ENCODE measurements at regions of chr14 and their contacts with region 1.

Region 1: GRCh38 chr14:95311752-95312151 is 8.0 kb downstream of the CLMN start:
- DNase-seq: peak; percentile 76 to 93 (median 90)
- H3K4me3 ChIP-seq: peak overlapping the region in 1 of 3 experiments; percentile 6
- H3K4me3 Mint-ChIP-seq: peak overlapping the region in 1 of 2 donors; percentile 79
- H3K27ac ChIP-seq: peak overlapping the region; percentile 96 to 97
- H3K27ac Mint-ChIP-seq: peak overlapping the region; percentile 92 to 98 (median 97)
- H3K4me1 ChIP-seq: peaks cover 62% of the 10 kb centered on the region in 2 donors
- H3K4me1 Mint-ChIP-seq: peaks cover 92% of the 10 kb centered on the region
- H3K27me3 ChIP-seq: no peaks in the 10 kb centered on the region
- H3K27me3 Mint-ChIP-seq: peaks cover 0 to 2% (median 1%) of the 10 kb centered on the region in 3 donors
- CTCF ChIP-seq: no peak

Region 2: GRCh38 chr14:95261616-95262510 is 49.9 kb before region 1 on chr14:
- intact Hi-C with region 1: loop called in 1 of 2 experiments (anchors 2 kb)
- DNase-seq: no peak
- H3K4me3 ChIP-seq: no peak overlapping the region
- H3K4me3 Mint-ChIP-seq: no peak overlapping the region
- H3K27ac ChIP-seq: no peak overlapping the region
- H3K27ac Mint-ChIP-seq: peak overlapping the region in 1 of 7 donors; percentile 50
- H3K4me1 ChIP-seq: peaks cover 17% of the 10 kb centered on the region in 2 donors
- H3K4me1 Mint-ChIP-seq: peaks cover 26% of the 10 kb centered on the region
- H3K27me3 ChIP-seq: no peaks in the 10 kb centered on the region
- H3K27me3 Mint-ChIP-seq: peaks cover 0 to 2% (median 2%) of the 10 kb centered on the region in 3 donors
- CTCF ChIP-seq: no peak

Region 3: DNA sequence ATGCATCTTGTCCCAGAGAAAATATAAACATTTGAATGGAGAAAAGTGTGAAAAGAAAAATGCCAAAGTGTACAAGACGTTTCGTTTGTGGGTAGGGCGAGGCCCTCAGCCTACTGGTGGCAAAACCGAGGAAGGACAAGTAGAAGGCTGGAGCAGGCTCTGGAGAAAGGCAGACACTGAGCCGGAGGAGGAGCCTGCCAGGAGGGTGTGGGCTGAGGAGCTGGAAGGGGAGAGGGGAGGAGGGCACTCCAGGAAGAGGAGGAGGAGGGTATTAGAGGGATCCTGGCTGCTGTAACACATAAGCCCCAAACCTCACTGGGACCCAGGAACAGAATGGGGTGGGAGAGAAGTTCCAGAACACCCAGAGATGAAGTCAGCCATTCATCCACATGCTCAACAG is 39.7 kb before region 1 on chr14:
- intact Hi-C with region 1: no loop called
- DNase-seq: no peak
- H3K4me3 ChIP-seq: no peak overlapping the region
- H3K4me3 Mint-ChIP-seq: no peak overlapping the region
- H3K27ac ChIP-seq: no peak overlapping the region
- H3K27ac Mint-ChIP-seq: peak overlapping the region in 2 of 7 donors; percentile 11 to 38
- H3K4me1 ChIP-seq: no peaks in the 10 kb centered on the region
- H3K4me1 Mint-ChIP-seq: peaks cover 8% of the 10 kb centered on the region
- H3K27me3 ChIP-seq: no peaks in the 10 kb centered on the region
- H3K27me3 Mint-ChIP-seq: peaks cover 0 to 2% (median 1%) of the 10 kb centered on the region in 3 donors
- CTCF ChIP-seq: no peak

Measured in CD14-positive monocyte (primary cell).